A549 (cell line): ENCODE measurements at regions of chr11 and their contacts with region 1.

Region 1: GRCh38 chr11:64448599-64449556 is 89.9 kb downstream of the RPS6KA4 start:
- DNase-seq: peak; percentile 81 to 87
- ATAC-seq: peak; percentile 88 to 97
- H3K4me3 ChIP-seq: peak overlapping the region; percentile 37
- H3K27ac ChIP-seq: peak overlapping the region; percentile 17 to 72; a peak in 4 of 6 replicates
- H3K4me1 ChIP-seq: peaks cover 10% of the 10 kb centered on the region; the same call in 2 of the 3 replicates
- CTCF ChIP-seq: peak; percentile 84
- EP300 ChIP-seq: no peak
- POLR2A ChIP-seq: no peak
- RAD21 ChIP-seq: peak; percentile 74 to 76; a peak in 4 of 5 replicates

Region 2: DNA sequence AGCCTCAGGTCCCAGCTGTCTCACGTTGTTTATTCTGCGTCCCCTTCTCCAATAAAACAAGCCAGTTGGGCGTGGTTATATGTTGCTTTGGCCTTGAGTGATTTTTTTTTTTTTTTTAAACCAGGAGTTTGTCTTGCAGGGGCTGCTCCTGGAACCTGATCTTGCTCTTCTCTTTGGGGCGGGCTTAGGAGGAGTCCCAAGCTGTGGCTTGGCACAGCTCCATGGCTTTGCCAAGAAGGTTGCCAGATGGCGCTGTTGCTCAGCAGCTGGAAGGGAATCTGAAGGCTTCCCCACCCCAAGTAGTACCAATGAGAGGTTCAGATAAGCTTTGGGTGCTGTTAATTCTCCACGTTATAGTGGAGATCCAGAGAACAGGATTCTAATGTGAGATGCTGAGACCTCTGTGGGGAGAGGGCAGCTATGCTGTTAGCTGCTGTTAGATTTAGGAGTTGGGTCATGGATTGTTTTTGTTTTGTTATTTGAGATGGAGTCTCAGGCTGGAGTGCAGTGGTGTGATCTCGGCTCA is 244.4 kb before region 1 on chr11:
- CTCF ChIA-PET with region 1: no interaction called
- POLR2A ChIA-PET with region 1: no interaction called
- DNase-seq: peak; percentile 89 to 94
- ATAC-seq: peak; percentile 55 to 83
- H3K4me3 ChIP-seq: no peak overlapping the region
- H3K27ac ChIP-seq: no peak overlapping the region
- H3K4me1 ChIP-seq: peaks cover 9% of the 10 kb centered on the region; the same call in 1 of the 3 replicates
- CTCF ChIP-seq: peak; percentile 77
- EP300 ChIP-seq: no peak
- POLR2A ChIP-seq: no peak
- RAD21 ChIP-seq: peak; percentile 62 to 80

Region 3: GRCh38 chr11:64358907-64359711 is 89.8 kb before region 1 on chr11 and contains the start of gene RPS6KA4:
- CTCF ChIA-PET with region 1: interaction called, 33 read pairs
- POLR2A ChIA-PET with region 1: no interaction called
- DNase-seq: peak; percentile 47 to 71
- ATAC-seq: peak; percentile 70 to 80
- H3K4me3 ChIP-seq: peak within 1 kb of the TSS; percentile 73
- H3K27ac ChIP-seq: peak within 1 kb of the TSS; percentile 86 to 98
- H3K4me1 ChIP-seq: peaks cover 50% of the 10 kb centered on the region
- CTCF ChIP-seq: no peak
- EP300 ChIP-seq: no peak
- POLR2A ChIP-seq: peak; percentile 64
- RAD21 ChIP-seq: no peak
- polyA plus RNA-seq, gene RPS6KA4: 19.1 and 21.4 TPM in 2 replicates

Region 4: DNA sequence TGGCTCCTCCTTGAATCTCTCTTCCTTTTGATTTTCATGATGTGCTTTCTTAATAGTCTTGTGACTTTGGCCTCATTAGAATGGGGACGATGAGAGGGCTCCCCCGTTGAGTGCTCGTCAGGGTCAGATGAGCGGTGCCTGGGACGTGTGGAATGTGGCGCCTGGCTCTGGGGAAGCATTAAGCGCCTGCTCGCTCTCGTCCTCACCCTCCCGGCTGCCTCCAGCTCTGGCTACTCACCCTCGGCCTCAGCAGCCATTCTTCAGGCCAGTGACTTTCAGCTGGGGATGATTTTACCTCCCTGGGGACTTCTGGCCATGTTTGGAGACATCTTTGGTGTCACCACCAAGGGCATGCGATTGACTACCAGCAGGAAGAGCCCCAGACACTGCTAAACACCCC is 20.2 kb before region 1 on chr11:
- CTCF ChIA-PET with region 1: interaction called, 20 read pairs
- POLR2A ChIA-PET with region 1: no interaction called
- DNase-seq: no peak
- ATAC-seq: no peak
- H3K4me3 ChIP-seq: no peak overlapping the region
- H3K27ac ChIP-seq: no peak overlapping the region
- H3K4me1 ChIP-seq: no peaks in the 10 kb centered on the region
- CTCF ChIP-seq: no peak
- EP300 ChIP-seq: no peak
- POLR2A ChIP-seq: no peak
- RAD21 ChIP-seq: no peak

Region 5: DNA sequence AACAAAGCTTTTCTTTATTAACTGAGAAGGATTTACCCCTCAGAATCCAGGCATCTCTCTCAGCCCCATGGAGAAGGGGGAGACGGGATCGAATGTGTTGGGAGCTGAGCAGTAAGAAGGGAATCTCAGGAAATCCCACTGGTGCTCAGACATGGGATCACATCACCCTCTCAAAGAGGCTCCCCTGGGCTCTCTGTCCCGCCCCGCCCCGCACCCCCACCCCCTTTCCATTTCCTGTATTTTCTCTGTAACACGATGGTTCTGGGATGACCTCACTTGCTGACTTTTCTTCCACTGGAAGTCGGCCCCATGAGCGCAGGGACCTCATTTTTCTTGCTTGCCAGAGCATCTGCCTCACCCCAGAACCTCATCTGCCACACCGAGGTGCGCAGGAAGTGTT is 10.1 kb after region 1 on chr11:
- CTCF ChIA-PET with region 1: interaction called, 30 read pairs
- POLR2A ChIA-PET with region 1: interaction called, 3 read pairs
- DNase-seq: no peak
- ATAC-seq: no peak
- H3K4me3 ChIP-seq: no peak overlapping the region
- H3K27ac ChIP-seq: no peak overlapping the region
- H3K4me1 ChIP-seq: no peaks in the 10 kb centered on the region
- CTCF ChIP-seq: no peak
- EP300 ChIP-seq: no peak
- POLR2A ChIP-seq: no peak
- RAD21 ChIP-seq: no peak

Region 6: GRCh38 chr11:64472593-64473455 is 23.9 kb after region 1 on chr11:
- CTCF ChIA-PET with region 1: interaction called, 19 read pairs
- POLR2A ChIA-PET with region 1: no interaction called
- DNase-seq: no peak
- ATAC-seq: no peak
- H3K4me3 ChIP-seq: no peak overlapping the region
- H3K27ac ChIP-seq: no peak overlapping the region
- H3K4me1 ChIP-seq: no peaks in the 10 kb centered on the region
- CTCF ChIP-seq: no peak
- EP300 ChIP-seq: no peak
- POLR2A ChIP-seq: no peak
- RAD21 ChIP-seq: no peak

Region 7: GRCh38 chr11:64652586-64653387 is 203.9 kb after region 1 on chr11:
- CTCF ChIA-PET with region 1: interaction called, 255 read pairs
- POLR2A ChIA-PET with region 1: no interaction called
- DNase-seq: peak; percentile 71 to 92
- ATAC-seq: peak; percentile 71 to 90
- H3K4me3 ChIP-seq: no peak overlapping the region
- H3K27ac ChIP-seq: no peak overlapping the region
- H3K4me1 ChIP-seq: peaks cover 13% of the 10 kb centered on the region; the same call in 2 of the 3 replicates
- CTCF ChIP-seq: peak; percentile 89
- EP300 ChIP-seq: no peak
- POLR2A ChIP-seq: no peak
- RAD21 ChIP-seq: peak; percentile 91 to 93

Region 8: DNA sequence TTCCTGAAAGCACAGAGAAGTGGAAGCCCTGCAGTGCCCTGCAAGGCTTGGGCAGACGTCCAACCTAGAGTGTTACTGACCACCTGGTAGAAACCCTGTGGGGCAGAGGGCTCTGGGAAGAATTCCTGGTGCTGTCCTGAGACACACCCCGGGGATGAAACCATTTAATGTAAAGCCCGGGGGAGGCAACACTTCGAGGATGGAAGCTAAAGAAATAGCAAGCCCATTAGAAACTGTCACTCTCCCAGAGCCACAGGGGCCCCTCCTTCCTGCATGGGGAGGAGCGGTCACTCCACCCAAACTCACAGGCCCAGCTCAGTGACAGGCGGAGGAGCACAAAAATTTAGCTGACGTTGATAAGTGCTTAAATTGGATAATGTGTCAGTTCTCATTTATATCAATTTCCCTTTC is 216.5 kb after region 1 on chr11:
- CTCF ChIA-PET with region 1: interaction called, 23 read pairs
- POLR2A ChIA-PET with region 1: no interaction called
- DNase-seq: no peak
- ATAC-seq: peak in 1 of 2 experiments; percentile 25; a peak in 2 of 6 replicates
- H3K4me3 ChIP-seq: no peak overlapping the region
- H3K27ac ChIP-seq: no peak overlapping the region
- H3K4me1 ChIP-seq: no peaks in the 10 kb centered on the region
- CTCF ChIP-seq: no peak
- EP300 ChIP-seq: no peak
- POLR2A ChIP-seq: no peak
- RAD21 ChIP-seq: no peak

Region 9: DNA sequence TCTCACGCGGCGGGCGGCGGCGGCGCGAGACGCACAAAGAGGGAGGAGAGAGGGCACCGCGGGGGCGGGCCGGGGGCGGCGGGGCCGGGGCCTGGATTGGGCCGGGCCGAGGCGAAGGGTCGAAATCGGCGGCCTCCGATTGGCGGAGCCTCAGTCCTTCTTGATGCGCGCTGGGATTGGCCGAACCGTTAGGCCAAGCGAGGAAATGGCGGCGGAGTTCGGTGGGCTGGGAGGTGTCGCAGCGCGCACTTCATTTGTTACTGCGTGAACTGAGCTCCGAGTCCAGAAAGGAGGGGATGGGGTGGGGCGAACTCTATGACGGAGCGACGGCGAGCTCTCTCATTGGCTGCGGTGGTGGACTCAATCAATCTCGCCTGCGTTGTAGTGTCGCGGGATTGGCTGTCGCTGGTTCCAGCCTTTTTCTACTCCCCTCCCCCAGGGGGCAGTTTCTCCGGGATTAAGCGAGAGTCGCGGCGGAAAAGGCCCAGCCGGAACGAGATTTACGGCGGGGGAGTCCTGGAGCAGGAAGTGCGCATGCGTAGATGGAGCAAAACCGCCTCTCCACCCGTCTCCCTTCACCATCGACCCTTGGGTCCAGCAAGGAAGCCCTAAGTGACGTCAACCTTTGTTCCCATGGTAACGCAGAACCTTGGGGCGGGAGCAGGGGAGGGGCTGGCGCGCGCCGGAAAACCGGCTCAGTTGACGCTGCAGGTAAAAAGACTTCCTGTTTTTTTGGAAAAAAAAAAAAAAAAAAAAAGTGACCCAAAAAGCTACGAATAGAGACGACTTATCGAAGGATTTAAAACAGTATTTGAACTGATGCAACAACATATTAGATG is 329.8 kb after region 1 on chr11 and contains the start of gene SF1:
- CTCF ChIA-PET with region 1: no interaction called
- POLR2A ChIA-PET with region 1: no interaction called
- DNase-seq: peak; percentile 99 to 100
- ATAC-seq: peak; percentile 91 to 96
- H3K4me3 ChIP-seq: peak within 1 kb of the TSS; percentile 90
- H3K27ac ChIP-seq: peak within 1 kb of the TSS; percentile 98 to 99
- H3K4me1 ChIP-seq: peaks cover 32% of the 10 kb centered on the region
- CTCF ChIP-seq: no peak
- EP300 ChIP-seq: no peak
- POLR2A ChIP-seq: peak; percentile 61
- RAD21 ChIP-seq: no peak
- polyA plus RNA-seq, gene SF1: 88.8 and 104 TPM in 2 replicates